Endothelial cell of umbilical vein (primary cell): ENCODE measurements at regions of chr5 and their contacts with region 1.

Region 1: DNA sequence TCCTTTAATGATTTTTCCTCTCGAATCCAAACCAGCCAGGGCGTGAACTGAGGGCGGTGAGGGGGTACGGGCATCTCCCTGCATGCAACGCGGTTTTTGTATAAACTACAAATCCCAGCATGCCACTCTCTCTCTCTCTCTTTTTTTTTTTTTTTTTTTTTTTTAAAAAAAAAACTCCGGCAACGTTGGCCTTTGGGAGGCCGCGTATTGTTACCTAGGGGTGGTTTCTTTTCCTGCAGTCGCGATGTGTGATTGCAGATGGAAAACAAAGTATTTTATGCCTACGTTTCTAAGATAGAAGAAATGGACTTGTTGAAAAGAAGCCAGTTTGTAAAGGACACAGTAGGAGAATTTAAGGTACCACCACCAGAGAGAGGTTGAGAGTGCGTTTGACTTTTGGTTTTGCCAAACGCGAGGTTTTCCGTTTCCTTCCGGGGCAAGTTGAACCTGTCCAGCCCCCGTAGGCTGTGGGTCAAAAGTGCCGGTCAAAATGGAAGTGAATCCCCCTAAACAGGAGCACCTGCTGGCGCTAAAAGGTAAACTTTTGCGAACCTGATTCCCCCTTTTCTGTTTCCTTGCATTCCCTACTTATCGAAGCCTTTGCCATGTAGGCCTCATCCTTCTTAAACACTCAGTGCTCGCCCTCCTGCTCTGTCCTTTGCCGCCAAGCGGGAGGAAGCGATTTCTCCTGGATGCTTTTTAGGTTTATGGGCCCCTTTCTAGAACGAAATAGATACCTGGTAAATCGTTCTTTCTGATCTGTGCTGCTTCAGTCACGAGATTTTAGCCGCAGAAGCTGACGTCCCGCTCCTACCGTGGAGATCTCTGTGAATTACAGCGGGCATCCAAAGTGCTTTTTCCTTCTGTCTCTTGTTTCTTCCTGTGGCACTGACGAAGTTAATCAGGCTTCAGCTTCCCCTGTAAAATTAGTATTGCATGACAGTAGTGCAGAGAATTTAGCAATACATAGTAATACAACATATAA is at the starts of genes SHLD3 and TRAPPC13:
- DNase-seq: peak; percentile 92
- H3K4me3 ChIP-seq: peak within 1 kb of the TSS; percentile 76 to 97 (median 92)
- H3K27ac ChIP-seq: peak within 1 kb of the TSS; percentile 84
- H3K4me1 ChIP-seq: peaks cover 19% of the 10 kb centered on the region
- H3K27me3 ChIP-seq: no peaks in the 10 kb centered on the region
- CTCF ChIP-seq: no peak
- POLR2A ChIP-seq: peak; percentile 56
- total RNA-seq, gene SHLD3: 3.6 TPM in 2 replicates
- total RNA-seq, gene TRAPPC13: 16.4 and 24.0 TPM in 2 replicates

Region 2: GRCh38 chr5:65837139-65837538 is 212.3 kb after region 1 on chr5:
- CTCF ChIA-PET with region 1: no interaction called
- POLR2A ChIA-PET with region 1: no interaction called
- dilution Hi-C with region 1: no loop called
- intact Hi-C with region 1: no loop called
- DNase-seq: no peak
- H3K4me3 ChIP-seq: no peak overlapping the region
- H3K27ac ChIP-seq: no peak overlapping the region
- H3K4me1 ChIP-seq: no peaks in the 10 kb centered on the region
- H3K27me3 ChIP-seq: no peaks in the 10 kb centered on the region
- CTCF ChIP-seq: no peak
- POLR2A ChIP-seq: no peak

Region 3: DNA sequence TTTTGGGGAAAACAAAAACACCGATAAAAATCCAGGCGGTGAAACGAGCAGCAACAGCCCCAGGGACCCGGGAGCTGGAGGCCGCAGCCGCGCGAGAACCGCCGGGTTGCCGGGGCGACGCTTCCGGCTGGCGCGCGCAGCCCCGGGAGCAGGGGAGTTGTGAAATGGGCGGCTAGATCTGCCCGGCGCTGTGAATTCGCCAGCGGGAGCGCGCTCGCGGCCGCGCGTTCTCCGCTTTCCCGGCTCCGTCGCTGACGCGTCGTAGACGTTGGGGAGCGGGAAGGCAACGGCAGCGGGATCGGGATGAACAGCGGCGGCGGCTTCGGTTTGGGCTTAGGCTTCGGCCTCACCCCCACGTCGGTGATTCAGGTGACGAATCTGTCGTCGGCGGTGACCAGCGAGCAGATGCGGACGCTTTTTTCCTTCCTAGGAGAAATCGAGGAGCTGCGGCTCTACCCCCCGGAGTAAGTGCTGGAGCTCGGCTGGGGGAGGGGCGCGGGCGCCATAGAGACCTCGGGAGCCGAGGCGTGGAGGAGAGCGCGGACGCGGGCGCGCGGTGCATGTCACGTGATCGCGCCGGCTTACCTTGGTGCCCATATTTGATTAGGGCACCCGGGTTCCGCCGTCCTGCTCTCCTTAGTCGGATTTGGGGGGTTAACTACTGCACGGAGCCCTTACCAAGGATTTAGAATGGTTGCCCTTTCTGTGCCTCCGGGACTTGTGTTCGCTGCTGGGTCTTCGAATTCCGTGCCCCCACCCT is 519.4 kb after region 1 on chr5 and contains the start of gene SREK1:
- CTCF ChIA-PET with region 1: no interaction called
- POLR2A ChIA-PET with region 1: no interaction called
- dilution Hi-C with region 1: no loop called
- intact Hi-C with region 1: loop called (anchors 10 kb)
- DNase-seq: peak; percentile 95
- H3K4me3 ChIP-seq: peak within 1 kb of the TSS; percentile 74 to 98 (median 77)
- H3K27ac ChIP-seq: peak within 1 kb of the TSS; percentile 93
- H3K4me1 ChIP-seq: peaks cover 16% of the 10 kb centered on the region
- H3K27me3 ChIP-seq: peaks cover 2 to 6% of the 10 kb centered on the region in 2 experiments
- CTCF ChIP-seq: no peak
- POLR2A ChIP-seq: peak; percentile 86
- total RNA-seq, gene SREK1: 72.9 and 78.6 TPM in 2 replicates